Esophagus muscularis mucosa (tissue), 4 donors: ENCODE measurements at regions of chr13 and their contacts with region 1.

Region 1: GRCh38 chr13:106548064-106548696 is 12.7 kb upstream of the EFNB2 start:
- DNase-seq: no peak
- H3K4me3 ChIP-seq: no peak overlapping the region
- H3K27ac ChIP-seq: no peak overlapping the region
- H3K4me1 ChIP-seq: peaks cover 18 to 49% (median 31%) of the 10 kb centered on the region in 4 donors
- H3K27me3 ChIP-seq: no peaks in the 10 kb centered on the region
- CTCF ChIP-seq: no peak
- EP300 ChIP-seq: no peak
- POLR2A ChIP-seq: no peak

Region 2: GRCh38 chr13:104773775-104774174 is 1774.4 kb before region 1 on chr13:
- intact Hi-C with region 1: loop called (anchors 10 kb)
- DNase-seq: no peak
- H3K4me3 ChIP-seq: no peak overlapping the region
- H3K27ac ChIP-seq: no peak overlapping the region
- H3K4me1 ChIP-seq: no peaks in the 10 kb centered on the region
- H3K27me3 ChIP-seq: no peaks in the 10 kb centered on the region
- CTCF ChIP-seq: peak in 2 of 3 experiments; percentile 38 to 53
- EP300 ChIP-seq: no peak
- POLR2A ChIP-seq: no peak

Region 3: DNA sequence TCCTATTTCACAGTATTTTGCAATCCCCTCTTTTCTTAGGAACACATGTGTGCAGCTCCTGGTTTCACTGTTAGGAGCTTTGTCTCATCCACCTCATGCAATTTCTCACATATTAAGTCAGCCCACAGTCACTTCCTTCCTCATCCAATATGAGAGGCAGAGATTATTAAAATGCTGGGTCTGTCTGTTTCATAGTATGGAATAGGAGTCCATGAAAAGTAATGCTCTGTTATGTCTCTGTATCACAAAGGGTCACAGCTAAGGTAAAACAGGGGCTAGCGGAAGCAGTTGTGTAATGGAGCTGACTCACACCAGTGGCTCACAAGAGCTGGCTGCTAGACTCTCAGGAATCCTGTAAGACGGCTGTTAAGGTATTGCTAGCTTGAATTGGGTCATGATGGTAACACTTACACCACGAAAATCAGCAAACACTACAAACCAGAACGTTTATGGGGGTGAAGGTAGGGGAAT is 229.2 kb before region 1 on chr13:
- intact Hi-C with region 1: no loop called
- DNase-seq: no peak
- H3K4me3 ChIP-seq: no peak overlapping the region
- H3K27ac ChIP-seq: no peak overlapping the region
- H3K4me1 ChIP-seq: no peaks in the 10 kb centered on the region
- H3K27me3 ChIP-seq: no peaks in the 10 kb centered on the region
- CTCF ChIP-seq: no peak
- EP300 ChIP-seq: no peak
- POLR2A ChIP-seq: no peak

Region 4: DNA sequence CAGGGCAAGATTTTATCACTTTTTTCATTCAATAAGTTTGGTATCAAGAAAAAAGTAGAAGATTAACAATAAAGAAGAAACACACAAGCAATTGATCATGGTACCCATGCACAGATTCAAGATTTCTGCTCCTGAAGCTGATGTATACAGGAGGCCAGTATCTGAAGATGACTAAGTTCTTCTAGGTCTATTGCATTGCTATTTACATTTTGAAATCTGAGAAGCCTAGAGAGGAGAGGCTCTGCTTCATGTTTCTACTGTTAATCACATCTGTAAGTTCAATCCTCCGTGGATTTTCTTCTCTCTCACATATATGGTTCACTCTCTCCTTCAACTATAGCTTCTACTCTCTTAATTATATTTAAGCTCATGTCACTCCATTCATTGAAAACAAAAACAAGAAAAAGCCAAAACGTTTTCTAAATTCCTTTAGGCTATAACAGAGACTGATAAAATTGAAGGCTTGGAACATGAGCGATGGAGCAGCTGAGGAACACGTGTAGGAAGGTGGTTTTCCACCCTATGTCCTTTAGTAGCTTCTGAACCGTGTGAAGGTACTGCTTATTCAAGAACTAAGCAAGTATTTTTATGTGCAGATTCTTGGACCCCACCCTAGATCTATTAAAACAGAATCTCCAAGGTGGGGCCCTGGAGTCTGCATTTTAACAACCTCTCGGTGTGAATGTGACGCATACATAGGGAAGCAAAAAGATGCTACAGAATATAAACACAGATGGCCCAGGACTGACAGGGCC is 210.9 kb before region 1 on chr13:
- intact Hi-C with region 1: no loop called
- DNase-seq: no peak
- H3K4me3 ChIP-seq: no peak overlapping the region
- H3K27ac ChIP-seq: no peak overlapping the region
- H3K4me1 ChIP-seq: no peaks in the 10 kb centered on the region
- H3K27me3 ChIP-seq: no peaks in the 10 kb centered on the region
- CTCF ChIP-seq: no peak
- EP300 ChIP-seq: no peak
- POLR2A ChIP-seq: no peak

Region 5: GRCh38 chr13:106690779-106691178 is 142.6 kb after region 1 on chr13:
- intact Hi-C with region 1: no loop called
- DNase-seq: peak; percentile 66
- H3K4me3 ChIP-seq: no peak overlapping the region
- H3K27ac ChIP-seq: peak overlapping the region; percentile 9 to 44 (median 20)
- H3K4me1 ChIP-seq: peaks cover 0 to 6% (median 0%) of the 10 kb centered on the region in 4 donors
- H3K27me3 ChIP-seq: no peaks in the 10 kb centered on the region
- CTCF ChIP-seq: no peak
- EP300 ChIP-seq: no peak
- POLR2A ChIP-seq: no peak